ENCODE measurements at regions of chr4 and their contacts with region 1.

Region 1: GRCh38 chr4:109803924-109804571 is 2.2 kb upstream of the CFI start:
- DNase-seq: peak; percentile 56
- H3K4me3 ChIP-seq: no peak overlapping the region
- H3K27ac ChIP-seq: no peak overlapping the region
- H3K4me1 ChIP-seq: peaks cover 12% of the 10 kb centered on the region
- H3K27me3 ChIP-seq: no peaks in the 10 kb centered on the region
- CTCF ChIP-seq: peak; percentile 27 to 34
- POLR2A ChIP-seq: no peak

Region 2: DNA sequence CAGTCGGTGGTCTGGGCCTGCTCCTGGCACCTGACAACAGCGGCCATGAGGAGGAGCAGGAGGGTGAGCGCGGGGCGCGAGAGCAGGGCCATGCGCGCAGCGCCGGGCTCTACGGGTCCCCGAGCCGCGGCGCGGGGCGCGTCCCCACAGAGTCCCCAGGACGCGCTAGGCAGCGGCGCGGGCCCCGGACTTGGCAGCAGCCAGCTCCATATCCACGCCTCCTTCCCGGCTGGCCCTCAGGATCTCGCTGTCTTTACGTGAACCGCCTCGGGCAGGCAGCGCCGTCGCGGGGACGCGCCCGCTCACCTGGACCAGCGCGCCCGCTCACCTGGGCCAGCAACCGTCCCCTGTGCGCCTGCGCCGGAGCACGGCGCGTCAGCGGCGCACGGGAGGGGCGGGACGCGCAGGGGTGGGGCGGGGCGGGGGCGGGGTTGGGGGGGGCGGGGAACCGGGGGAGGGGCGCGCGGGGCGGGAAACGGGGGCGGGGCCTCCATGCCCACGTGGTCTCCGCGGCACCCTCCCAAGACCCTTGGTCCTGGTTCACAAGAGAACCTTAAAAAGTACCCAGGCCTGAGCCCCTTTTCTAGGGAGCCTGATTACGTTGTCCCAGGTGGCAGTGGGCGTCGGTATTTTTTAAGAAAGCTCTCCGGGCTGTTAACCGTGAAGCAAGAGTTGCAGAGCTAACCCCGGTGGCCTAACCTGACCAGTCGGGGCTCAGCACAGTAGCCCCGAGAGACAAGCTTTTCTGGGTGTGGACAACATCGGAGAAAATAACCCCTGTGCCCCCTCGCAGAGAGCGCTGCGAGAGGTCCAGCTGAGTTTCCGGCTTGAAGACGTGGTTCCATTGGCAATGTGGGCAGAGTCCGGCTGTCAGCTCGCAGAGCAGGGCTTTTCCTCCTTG is 74.1 kb before region 1 on chr4 and contains the start of gene PLA2G12A:
- CTCF ChIA-PET with region 1: interaction called, 4 read pairs
- POLR2A ChIA-PET with region 1: no interaction called
- dilution Hi-C with region 1: no loop called
- intact Hi-C with region 1: loop called (anchors 2 kb)
- DNase-seq: peak; percentile 75
- H3K4me3 ChIP-seq: peak within 1 kb of the TSS; percentile 86 to 92 (median 86)
- H3K27ac ChIP-seq: peak within 1 kb of the TSS; percentile 48
- H3K4me1 ChIP-seq: peaks cover 9% of the 10 kb centered on the region
- H3K27me3 ChIP-seq: no peaks in the 10 kb centered on the region
- CTCF ChIP-seq: no peak
- POLR2A ChIP-seq: no peak
- total RNA-seq, gene PLA2G12A: 16.6 and 21.6 TPM in 2 replicates

Region 3: GRCh38 chr4:110155654-110156053 is 351.6 kb after region 1 on chr4:
- CTCF ChIA-PET with region 1: no interaction called
- POLR2A ChIA-PET with region 1: no interaction called
- dilution Hi-C with region 1: no loop called
- intact Hi-C with region 1: no loop called
- DNase-seq: no peak
- H3K4me3 ChIP-seq: no peak overlapping the region
- H3K27ac ChIP-seq: no peak overlapping the region
- H3K4me1 ChIP-seq: no peaks in the 10 kb centered on the region
- H3K27me3 ChIP-seq: no peaks in the 10 kb centered on the region
- CTCF ChIP-seq: no peak
- POLR2A ChIP-seq: no peak

Measured in endothelial cell of umbilical vein (primary cell).